ENCODE measurements at regions of chr11 and their contacts with region 1.

Region 1: GRCh38 chr11:105811242-105811641 is 201.4 kb downstream of the GRIA4 start:
- DNase-seq: no peak
- H3K4me3 ChIP-seq: no peak overlapping the region
- H3K27ac ChIP-seq: no peak overlapping the region
- H3K4me1 ChIP-seq: no peaks in the 10 kb centered on the region
- H3K27me3 ChIP-seq: no peaks in the 10 kb centered on the region
- CTCF ChIP-seq: no peak

Region 2: GRCh38 chr11:105489446-105489845 is 321.8 kb before region 1 on chr11:
- CTCF ChIA-PET with region 1: no interaction called
- POLR2A ChIA-PET with region 1: no interaction called
- intact Hi-C with region 1: no loop called
- DNase-seq: no peak
- H3K4me3 ChIP-seq: no peak overlapping the region
- H3K27ac ChIP-seq: no peak overlapping the region
- H3K4me1 ChIP-seq: no peaks in the 10 kb centered on the region
- H3K27me3 ChIP-seq: no peaks in the 10 kb centered on the region
- CTCF ChIP-seq: no peak

Region 3: DNA sequence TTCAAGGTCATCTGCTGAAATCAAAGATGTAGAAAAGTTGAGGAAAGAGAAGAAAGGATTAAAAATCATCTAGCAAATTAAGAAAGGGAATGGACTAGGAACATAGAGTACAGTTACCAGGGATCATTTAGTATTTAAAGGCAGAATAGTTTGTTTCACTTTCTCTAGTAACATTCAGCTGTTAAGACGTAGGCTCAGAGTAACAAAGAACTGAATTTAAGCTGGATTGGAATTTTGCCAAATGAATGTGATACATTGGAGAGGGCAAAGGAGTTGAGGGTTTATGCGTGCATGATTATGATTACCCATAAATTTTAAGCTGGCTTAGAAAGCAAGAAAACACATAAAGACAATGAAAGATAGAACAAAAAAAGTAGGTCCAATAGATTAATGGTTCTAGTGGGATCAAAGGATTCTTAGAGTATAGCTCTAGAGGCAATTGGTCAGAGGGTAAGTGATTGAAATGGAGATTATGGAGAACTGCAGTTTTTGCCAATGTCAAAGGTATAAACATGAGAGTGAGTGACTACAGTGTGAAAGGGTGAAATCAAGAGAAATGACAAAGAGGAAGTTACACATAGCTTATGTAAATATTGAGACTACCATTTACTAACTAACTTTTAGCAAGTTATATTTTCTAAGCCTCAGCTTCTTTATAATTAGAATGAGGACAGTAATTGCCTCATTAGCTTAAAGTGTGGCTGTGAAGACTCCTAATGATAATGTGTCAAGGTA is 11.3 kb before region 1 on chr11:
- CTCF ChIA-PET with region 1: no interaction called
- POLR2A ChIA-PET with region 1: no interaction called
- intact Hi-C with region 1: no loop called
- DNase-seq: no peak
- H3K4me3 ChIP-seq: no peak overlapping the region
- H3K27ac ChIP-seq: no peak overlapping the region
- H3K4me1 ChIP-seq: no peaks in the 10 kb centered on the region
- H3K27me3 ChIP-seq: no peaks in the 10 kb centered on the region
- CTCF ChIP-seq: no peak

Region 4: GRCh38 chr11:105838668-105839384 is 27.6 kb after region 1 on chr11:
- CTCF ChIA-PET with region 1: no interaction called
- POLR2A ChIA-PET with region 1: interaction called, 12 read pairs
- intact Hi-C with region 1: no loop called
- DNase-seq: peak; percentile 13 to 72
- H3K4me3 ChIP-seq: no peak overlapping the region
- H3K27ac ChIP-seq: peak overlapping the region; percentile 21; the same call in 1 of the 2 replicates
- H3K4me1 ChIP-seq: peaks cover 5% of the 10 kb centered on the region; the same call in 1 of the 2 replicates
- H3K27me3 ChIP-seq: no peaks in the 10 kb centered on the region
- CTCF ChIP-seq: no peak

Region 5: GRCh38 chr11:105968021-105968697 is 156.9 kb after region 1 on chr11:
- CTCF ChIA-PET with region 1: no interaction called
- POLR2A ChIA-PET with region 1: no interaction called
- intact Hi-C with region 1: no loop called
- DNase-seq: no peak
- H3K4me3 ChIP-seq: no peak overlapping the region
- H3K27ac ChIP-seq: no peak overlapping the region
- H3K4me1 ChIP-seq: peaks cover 4% of the 10 kb centered on the region
- H3K27me3 ChIP-seq: no peaks in the 10 kb centered on the region
- CTCF ChIP-seq: no peak